ENCODE measurements at regions of chr12 and their contacts with region 1.

Region 1: GRCh38 chr12:15220994-15221885 is at the start of gene RERG:
- DNase-seq: peak; percentile 77 to 84 (median 82)
- ATAC-seq: peak; percentile 100
- H3K4me3 ChIP-seq: no peak within 1 kb of the TSS
- H3K4me1 ChIP-seq: no peaks in the 10 kb centered on the region
- CTCF ChIP-seq: peak; percentile 96
- total RNA-seq, gene RERG: 1.4 to 31.6 (median 5.2) TPM

Region 2: DNA sequence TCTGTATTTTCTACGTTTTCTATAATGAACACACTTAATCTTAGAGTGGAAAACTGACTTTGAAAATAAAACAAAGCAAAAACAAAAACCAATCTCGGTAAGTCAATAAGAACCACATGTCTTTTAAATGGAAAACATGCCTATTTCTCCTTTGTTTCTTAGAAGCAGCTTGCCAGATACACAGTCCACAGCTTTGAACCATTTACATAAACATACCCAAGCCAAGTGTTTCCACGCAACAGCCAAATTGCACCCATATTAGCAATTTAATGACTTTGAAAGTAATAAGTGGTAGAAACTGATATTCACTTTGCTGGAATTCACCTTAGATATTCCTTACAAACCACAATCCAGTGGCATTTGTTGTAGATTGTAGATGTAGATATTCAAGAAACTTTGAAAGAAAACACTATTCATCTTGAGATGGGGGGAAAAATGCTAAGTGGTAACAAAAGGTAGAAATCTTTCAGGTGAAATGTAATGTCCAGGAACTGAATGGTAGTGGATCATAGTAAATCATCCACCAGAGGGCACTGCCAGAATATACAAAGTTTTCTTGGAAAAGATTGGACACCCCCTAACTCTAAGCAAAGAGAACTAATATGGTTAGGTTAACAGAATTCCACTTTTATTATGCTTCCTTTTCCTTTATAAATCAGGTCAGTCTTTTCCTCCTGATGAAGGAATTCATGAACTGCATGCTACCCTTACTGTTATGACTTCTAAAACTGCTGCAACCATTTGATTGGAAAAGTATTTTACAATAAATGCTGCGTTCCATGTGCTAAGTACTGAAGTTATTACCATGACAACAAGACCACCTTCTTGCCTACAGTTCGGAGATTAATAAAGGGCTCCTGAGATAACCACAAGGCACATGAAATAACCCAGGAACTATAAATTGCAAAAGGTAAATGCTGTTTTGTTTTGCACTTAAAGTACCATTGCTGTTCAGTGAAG is 69.8 kb before region 1 on chr12:
- intact Hi-C with region 1: loop called (anchors 5 kb)
- DNase-seq: peak in 1 of 3 donors; percentile 49
- ATAC-seq: peak; percentile 47
- H3K4me3 ChIP-seq: no peak overlapping the region
- H3K4me1 ChIP-seq: no peaks in the 10 kb centered on the region
- CTCF ChIP-seq: no peak